IMR-90 (cell line): ENCODE measurements at regions of chr1 and their contacts with region 1.

Region 1: GRCh38 chr1:184792450-184792969 is 37.9 kb upstream of the EDEM3 start:
- DNase-seq: peak; percentile 99
- ATAC-seq: peak; percentile 94
- H3K4me3 ChIP-seq: no peak overlapping the region
- H3K27ac ChIP-seq: peak overlapping the region; percentile 67
- H3K4me1 ChIP-seq: peaks cover 9% of the 10 kb centered on the region
- H3K27me3 ChIP-seq: no peaks in the 10 kb centered on the region
- CTCF ChIP-seq: no peak
- POLR2A ChIP-seq: peak; percentile 58; the same call in 1 of the 2 replicates
- RAD21 ChIP-seq: peak; percentile 11; the same call in 1 of the 2 replicates

Region 2: DNA sequence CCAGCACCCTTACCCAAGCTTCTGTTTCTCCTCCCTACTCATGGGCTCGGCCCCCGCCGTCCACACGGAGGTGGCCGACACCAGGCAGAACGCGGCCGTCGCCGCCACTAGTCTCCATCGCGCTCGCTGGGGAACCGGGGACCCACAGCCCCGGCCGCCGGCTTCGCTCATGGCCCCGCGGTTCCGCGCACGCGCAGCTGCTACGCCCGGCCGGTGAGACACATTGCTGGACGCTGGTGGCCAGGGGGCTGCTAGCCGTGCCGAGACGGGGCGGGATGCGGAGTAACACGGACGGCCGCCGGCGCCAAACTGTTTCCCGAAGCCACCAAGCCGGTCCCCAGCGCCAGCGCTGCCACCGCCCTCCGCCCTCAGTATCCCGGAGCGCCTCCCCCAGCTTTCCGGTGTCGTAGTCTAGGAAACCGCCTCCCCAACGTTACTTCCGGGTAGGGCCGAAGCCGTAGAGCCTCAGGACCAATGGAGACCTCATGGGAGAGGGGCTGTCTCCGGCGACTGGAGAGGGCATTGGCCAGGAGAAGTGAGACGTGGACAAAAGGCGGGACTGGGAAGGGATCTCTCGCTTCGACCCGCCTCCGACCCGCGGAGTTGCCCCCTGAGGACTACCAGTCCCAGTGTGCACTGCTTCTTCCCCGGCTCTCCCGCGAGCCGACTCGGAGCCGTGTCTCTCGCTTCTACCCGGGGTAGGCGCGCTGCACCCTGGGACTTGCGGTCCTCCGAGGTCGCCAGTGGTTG is 37.9 kb before region 1 on chr1 and contains the start of gene EDEM3:
- CTCF ChIA-PET with region 1: no interaction called
- POLR2A ChIA-PET with region 1: no interaction called
- dilution Hi-C with region 1: no loop called
- in situ Hi-C with region 1: no loop called
- intact Hi-C with region 1: loop called (anchors 5 kb)
- DNase-seq: peak; percentile 99
- ATAC-seq: peak; percentile 98
- H3K4me3 ChIP-seq: peak within 1 kb of the TSS; percentile 74
- H3K27ac ChIP-seq: peak within 1 kb of the TSS; percentile 86
- H3K4me1 ChIP-seq: no peaks in the 10 kb centered on the region
- H3K27me3 ChIP-seq: no peaks in the 10 kb centered on the region
- CTCF ChIP-seq: no peak
- POLR2A ChIP-seq: peak; percentile 85
- RAD21 ChIP-seq: no peak
- total RNA-seq, gene EDEM3: 29.9 and 50.5 TPM in 2 replicates